ENCODE measurements at regions of chr19 and their contacts with region 1.

Region 1: DNA sequence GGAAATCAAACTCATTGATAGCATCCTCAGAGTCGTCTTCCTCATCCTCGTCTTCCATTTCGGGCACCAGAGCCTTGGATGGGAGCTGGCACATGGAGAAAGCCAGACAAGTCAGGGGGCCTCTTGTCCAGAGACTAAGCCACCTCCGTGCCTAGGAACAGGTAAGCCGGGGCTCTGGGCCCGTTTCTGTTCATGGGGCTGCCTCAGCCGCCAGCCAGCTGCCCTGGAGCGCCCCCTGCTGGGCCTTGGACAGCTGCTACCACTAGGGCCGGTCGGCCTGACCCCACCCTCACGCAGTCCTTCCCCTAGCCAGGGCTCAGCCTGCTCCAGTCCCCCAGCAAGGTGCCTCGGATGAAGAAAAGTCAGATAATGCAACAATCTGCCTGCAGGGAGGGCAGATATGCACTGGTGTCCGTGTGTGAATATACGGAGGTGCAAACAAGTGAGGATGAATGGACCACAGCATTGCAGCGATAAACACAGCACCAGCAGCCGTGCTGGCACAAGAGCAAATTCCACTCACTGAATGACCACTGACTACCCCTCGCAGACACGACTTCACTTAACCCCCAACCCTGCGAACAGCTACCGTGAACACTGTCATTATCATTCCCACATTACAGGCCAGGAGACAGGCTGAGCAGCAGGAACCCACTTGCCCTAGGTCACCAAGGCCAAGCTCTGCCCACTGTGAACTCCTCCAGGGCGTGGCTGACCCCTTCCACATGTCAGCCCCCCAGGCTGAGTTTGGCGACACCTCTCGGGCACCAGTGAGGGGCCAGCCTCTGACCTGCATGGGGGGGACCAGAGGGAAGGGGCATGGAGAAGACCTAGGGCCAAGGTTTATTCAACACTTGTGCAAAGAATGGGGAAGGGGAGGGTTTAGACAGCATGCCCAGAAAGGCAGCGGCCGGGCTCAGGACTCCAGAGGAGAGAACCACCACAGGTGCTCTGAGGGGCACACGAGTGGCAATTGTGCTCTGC is 12.1 kb upstream of the PRKD2 start:
- DNase-seq: peak; percentile 85
- ATAC-seq: peak; percentile 94
- H3K4me3 Mint-ChIP-seq: no peak overlapping the region
- H3K27ac Mint-ChIP-seq: peak overlapping the region; percentile 31
- H3K4me1 Mint-ChIP-seq: peaks cover 24% of the 10 kb centered on the region
- H3K27me3 Mint-ChIP-seq: no peaks in the 10 kb centered on the region

Region 2: GRCh38 chr19:46587861-46588260 is 141.1 kb before region 1 on chr19:
- CTCF ChIA-PET with region 1: no interaction called
- DNase-seq: no peak
- ATAC-seq: no peak
- H3K4me3 Mint-ChIP-seq: no peak overlapping the region
- H3K27ac Mint-ChIP-seq: no peak overlapping the region
- H3K4me1 Mint-ChIP-seq: peaks cover 2% of the 10 kb centered on the region
- H3K27me3 Mint-ChIP-seq: peaks cover 17% of the 10 kb centered on the region

Region 3: DNA sequence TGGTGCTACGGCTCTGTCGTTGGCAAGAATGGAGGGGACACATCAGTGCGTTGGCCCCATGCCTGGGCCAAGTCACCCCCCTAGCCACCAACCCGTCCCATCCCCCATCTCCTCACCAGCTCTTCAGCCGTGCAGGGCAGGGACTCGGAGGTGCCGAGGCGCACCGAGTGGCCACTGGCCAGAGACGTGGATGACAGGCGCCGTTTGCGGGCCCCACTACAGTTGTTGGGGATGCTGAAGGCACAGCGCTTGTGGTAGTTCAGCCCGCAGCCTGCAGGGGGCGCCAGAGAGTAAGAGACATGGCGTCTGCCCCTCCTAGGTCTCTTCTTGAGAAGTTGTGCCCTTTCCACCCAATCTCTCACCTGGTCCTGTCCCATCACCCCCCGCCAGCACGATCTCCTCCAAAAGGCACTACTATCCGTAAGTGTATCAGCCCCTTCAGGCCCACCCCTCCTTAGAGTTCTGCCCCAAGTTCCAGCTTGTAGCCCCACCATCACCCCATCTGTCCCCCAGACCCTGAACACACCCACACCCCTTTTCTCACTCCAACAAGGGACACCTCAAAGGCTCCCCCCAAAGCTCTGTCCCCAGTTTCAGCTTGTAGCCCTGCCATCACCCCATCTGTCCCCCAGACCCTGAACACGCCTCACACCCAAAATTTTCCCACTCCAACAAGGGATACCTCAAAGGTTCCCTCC is 24.5 kb before region 1 on chr19:
- CTCF ChIA-PET with region 1: interaction called, 86 read pairs
- DNase-seq: peak; percentile 90
- ATAC-seq: peak; percentile 88
- H3K4me3 Mint-ChIP-seq: no peak overlapping the region
- H3K27ac Mint-ChIP-seq: peak overlapping the region; percentile 67
- H3K4me1 Mint-ChIP-seq: peaks cover 6% of the 10 kb centered on the region
- H3K27me3 Mint-ChIP-seq: no peaks in the 10 kb centered on the region

Region 4: DNA sequence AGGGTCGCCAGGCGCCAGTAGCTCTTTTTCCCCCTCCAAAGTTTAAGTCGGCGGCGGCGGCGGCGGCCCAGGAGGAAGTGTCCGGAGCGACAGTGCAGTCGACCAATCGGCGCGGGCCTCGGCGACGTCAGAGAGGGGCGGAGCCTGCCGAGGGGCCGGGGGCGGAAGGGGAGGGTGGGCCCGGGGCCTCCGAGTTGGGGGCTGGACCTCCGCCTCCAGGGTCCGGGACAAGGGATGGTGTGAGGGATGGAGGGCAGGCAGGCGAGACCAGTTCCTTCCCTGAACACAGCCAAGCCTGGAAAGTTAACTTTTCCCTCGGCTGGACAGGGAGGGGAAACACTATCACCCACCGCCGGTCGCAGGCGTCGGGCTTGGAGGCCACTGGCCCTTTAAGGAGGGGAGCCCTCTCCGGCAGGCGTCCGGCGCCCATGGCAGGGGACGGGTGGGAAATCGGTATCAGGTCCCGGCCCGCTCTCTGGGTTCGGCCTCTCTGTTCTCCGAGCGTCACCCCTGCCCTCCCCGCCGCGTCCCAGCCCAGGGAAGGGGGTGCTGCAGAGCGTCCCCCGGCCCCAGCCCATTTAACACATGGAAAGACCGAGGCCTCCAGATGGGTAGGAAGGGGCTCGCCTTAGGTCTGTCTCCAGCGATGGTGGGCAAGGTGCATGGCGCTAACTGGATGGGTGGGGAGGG is 11.8 kb before region 1 on chr19 and contains the start of gene PRKD2:
- CTCF ChIA-PET with region 1: interaction called, 43 read pairs
- DNase-seq: peak; percentile 94
- ATAC-seq: peak; percentile 59
- H3K4me3 Mint-ChIP-seq: peak within 1 kb of the TSS; percentile 95
- H3K27ac Mint-ChIP-seq: peak within 1 kb of the TSS; percentile 96
- H3K4me1 Mint-ChIP-seq: peaks cover 36% of the 10 kb centered on the region
- H3K27me3 Mint-ChIP-seq: no peaks in the 10 kb centered on the region
- total RNA-seq, gene PRKD2: 147 to 187 TPM

Region 5: GRCh38 chr19:46741447-46741846 is 12.5 kb after region 1 on chr19:
- CTCF ChIA-PET with region 1: interaction called, 14 read pairs
- DNase-seq: no peak
- ATAC-seq: no peak
- H3K4me3 Mint-ChIP-seq: no peak overlapping the region
- H3K27ac Mint-ChIP-seq: no peak overlapping the region
- H3K4me1 Mint-ChIP-seq: peaks cover 38% of the 10 kb centered on the region
- H3K27me3 Mint-ChIP-seq: no peaks in the 10 kb centered on the region

Measured in activated CD8-positive, alpha-beta memory T cell treated with anti-CD3 and anti-CD28 coated beads, Interleukin-2, amount 10 ng/mL, durations not matched to agents 7 days and 5 days (primary cell).